AG04449 (cell line): ENCODE measurements at regions of chr1 and their contacts with region 1.

Region 1: GRCh38 chr1:220189750-220190347 is 82.4 kb downstream of the RAB3GAP2 start:
- DNase-seq: no peak
- H3K4me3 ChIP-seq: no peak overlapping the region
- CTCF ChIP-seq: peak; percentile 22

Region 2: DNA sequence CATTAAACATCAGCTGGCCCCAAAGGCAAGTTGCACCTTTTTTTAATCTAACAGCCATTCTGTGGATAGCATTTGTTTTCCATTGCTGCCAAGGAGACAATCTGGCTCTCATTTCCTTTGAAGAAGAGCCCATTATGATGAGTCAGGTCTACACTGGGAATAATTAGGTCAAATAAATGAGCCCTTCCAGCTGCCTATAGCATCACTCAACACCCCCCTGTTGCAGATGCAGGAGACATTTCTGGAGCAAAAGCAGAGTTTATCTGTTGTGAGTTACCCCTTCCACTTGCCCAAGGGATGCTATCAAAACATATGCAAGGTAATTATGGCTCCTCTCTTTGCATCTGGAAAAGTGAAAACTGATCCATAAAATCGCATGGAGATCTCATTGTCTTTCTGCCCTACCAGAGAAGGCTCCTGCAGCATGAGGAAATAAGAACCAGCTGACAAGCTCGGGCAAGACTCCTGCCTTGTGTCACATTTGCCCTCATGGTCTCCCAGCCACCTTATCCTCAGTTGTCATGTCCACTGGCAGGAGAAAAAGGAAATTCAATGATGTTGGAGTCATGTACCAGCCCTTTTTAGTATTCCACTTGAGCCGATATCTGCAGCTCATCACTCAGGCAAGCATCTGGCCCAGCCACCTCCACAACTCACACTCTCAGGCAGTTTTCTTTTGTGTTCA is 397.4 kb before region 1 on chr1:
- CTCF ChIA-PET with region 1: no interaction called
- POLR2A ChIA-PET with region 1: no interaction called
- DNase-seq: peak; percentile 49
- H3K4me3 ChIP-seq: no peak overlapping the region
- CTCF ChIP-seq: no peak

Region 3: GRCh38 chr1:220207411-220207810 is 17.6 kb after region 1 on chr1:
- CTCF ChIA-PET with region 1: interaction called, 14 read pairs
- POLR2A ChIA-PET with region 1: no interaction called
- DNase-seq: no peak
- H3K4me3 ChIP-seq: no peak overlapping the region
- CTCF ChIP-seq: no peak